ENCODE measurements at regions of chr22 and their contacts with region 1.

Region 1: GRCh38 chr22:36470162-36470993 is 11.1 kb downstream of the TXN2 start:
- DNase-seq: peak; percentile 89
- H3K4me3 ChIP-seq: no peak overlapping the region
- H3K27ac ChIP-seq: no peak overlapping the region
- H3K4me1 ChIP-seq: peaks cover 19% of the 10 kb centered on the region
- H3K27me3 ChIP-seq: no peaks in the 10 kb centered on the region
- CTCF ChIP-seq: peak; percentile 95

Region 2: DNA sequence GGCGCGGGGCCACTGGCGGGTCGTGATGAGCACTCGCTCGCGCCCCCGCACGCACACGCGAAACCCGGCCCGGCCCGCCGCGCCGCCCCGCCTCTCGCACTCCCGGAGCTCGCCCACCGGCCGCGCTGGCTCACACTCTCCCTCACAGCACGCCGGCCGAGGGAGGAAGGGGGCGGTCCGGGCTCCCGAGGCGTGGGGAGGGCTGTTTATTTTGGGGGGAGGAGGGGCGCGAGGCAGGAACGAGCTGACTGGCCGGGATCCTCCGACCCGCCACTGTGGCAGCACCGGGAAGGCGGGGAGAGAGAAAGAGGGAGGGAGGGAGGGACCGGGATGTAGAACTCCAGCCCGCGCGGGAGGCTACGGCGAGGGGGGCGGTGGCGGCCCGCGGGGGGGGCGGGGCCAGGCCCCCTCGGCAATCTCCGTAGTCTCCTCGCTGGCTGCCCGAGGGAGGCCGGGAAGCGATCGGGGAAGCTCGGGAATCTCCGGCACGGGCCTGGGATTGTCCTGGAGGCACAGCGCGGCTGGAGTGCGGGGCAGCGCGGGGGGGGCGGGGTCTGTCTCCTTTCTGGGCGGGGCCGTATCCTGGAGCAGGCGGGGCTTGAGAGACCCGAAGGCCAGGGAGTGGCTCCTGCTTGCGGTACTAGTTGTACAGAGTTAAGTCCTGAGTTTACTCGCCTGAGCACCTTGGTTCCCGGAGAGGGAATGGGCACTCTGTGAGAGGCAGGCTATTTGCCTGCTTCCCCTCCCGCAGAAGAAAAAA is 441.6 kb before region 1 on chr22 and contains the start of gene RBFOX2:
- CTCF ChIA-PET with region 1: interaction called, 10 read pairs
- POLR2A ChIA-PET with region 1: no interaction called
- intact Hi-C with region 1: no loop called
- DNase-seq: peak; percentile 97
- H3K4me3 ChIP-seq: peak within 1 kb of the TSS; percentile 89
- H3K27ac ChIP-seq: peak within 1 kb of the TSS; percentile 84
- H3K4me1 ChIP-seq: peaks cover 21% of the 10 kb centered on the region
- H3K27me3 ChIP-seq: no peaks in the 10 kb centered on the region
- CTCF ChIP-seq: no peak
- total RNA-seq, gene RBFOX2: 142 and 154 TPM in 2 replicates

Region 3: DNA sequence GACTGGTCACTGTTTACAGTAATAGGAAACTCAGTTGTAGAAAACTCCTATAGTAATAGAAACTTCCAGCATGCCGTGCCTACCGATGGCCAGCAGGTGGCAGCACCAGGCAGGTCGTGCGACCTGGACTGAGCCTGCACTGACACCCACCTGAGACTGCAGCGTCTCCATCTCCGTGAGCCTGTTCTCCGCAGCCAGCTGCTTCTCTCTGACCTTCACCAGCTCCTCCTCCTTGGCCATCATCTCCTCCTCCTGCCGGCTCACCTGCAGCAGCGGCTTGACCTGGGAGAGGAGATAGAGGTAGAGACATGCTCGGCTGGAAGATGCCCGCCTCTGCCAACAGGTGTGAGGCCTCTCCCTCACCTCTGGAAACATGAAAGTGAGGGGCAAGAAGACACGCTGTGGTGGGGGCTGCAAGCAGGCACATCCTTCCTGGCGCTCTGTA is 169.0 kb before region 1 on chr22:
- CTCF ChIA-PET with region 1: interaction called, 15 read pairs
- POLR2A ChIA-PET with region 1: no interaction called
- intact Hi-C with region 1: loop called (anchors 1 kb)
- DNase-seq: peak; percentile 70
- H3K4me3 ChIP-seq: no peak overlapping the region
- H3K27ac ChIP-seq: no peak overlapping the region
- H3K4me1 ChIP-seq: no peaks in the 10 kb centered on the region
- H3K27me3 ChIP-seq: no peaks in the 10 kb centered on the region
- CTCF ChIP-seq: peak; percentile 94